Activated CD4-positive, alpha-beta memory T cell treated with anti-CD3 and anti-CD28 coated beads, Interleukin-2, amount 10 ng/mL, durations not matched to agents 7 days and 5 days (primary cell): ENCODE measurements at regions of chr1 and their contacts with region 1.

Region 1: DNA sequence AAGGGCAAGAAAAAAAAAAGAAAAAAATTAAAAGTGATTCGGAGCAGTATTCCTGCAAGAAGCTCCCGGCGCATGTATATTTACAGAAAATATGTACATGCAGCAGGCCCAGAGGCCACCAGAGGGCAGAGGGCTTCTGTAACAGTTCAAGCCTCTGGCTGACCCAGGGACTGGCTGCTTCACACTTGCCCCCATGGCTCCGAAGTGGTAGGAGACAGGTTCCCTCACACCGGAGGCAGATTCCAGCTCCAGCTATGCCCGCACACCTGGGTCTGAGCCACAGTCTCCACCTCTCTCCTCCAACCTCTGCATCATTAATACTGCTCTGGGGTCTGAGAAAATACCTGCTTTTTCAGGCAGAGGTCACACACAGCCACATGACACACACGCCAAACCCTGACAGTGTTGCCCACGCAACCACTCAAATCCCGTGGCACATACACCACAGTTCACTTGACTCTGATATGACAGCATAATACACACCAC is 2.2 kb upstream of the ARHGAP30 start:
- DNase-seq: peak; percentile 61
- H3K4me3 Mint-ChIP-seq: no peak overlapping the region
- H3K27ac Mint-ChIP-seq: peak overlapping the region; percentile 36
- H3K4me1 Mint-ChIP-seq: peaks cover 40% of the 10 kb centered on the region
- H3K27me3 Mint-ChIP-seq: no peaks in the 10 kb centered on the region

Region 2: DNA sequence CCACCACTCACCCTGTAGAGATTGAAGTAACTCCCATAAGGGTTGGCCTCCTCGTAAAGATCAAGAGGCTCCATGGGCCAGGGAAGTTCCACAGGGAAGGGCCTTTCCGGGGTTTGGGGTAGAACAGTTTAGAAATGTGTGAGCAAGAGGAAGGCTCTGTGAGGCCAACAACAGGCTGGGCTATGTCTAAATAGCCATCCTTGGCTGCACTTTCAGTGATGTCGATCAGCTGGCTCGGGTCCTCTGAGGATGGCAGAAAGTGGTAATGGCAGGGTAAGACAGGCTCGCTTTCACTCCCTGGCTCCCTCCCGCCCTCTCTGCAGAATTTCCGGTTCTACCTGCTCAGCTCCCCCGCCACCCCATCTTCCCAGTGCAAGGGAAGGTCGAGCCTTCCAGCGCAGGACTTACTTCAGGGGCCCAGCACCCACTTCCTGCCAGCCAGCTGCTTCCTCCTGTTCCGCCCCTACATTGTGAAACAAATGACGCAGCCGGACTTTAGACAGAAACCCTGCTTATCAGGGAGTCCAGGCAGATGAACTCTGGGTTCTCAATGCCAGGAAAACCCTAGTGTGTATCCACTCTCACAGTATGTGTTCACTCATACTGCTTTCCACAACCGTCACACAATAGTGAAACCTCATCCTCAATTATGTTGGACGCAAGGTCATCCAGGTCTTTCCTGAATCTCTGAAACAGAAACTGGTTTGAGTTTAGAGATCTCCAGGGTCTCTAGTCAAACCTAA is 58.3 kb before region 1 on chr1:
- CTCF ChIA-PET with region 1: interaction called, 3 read pairs
- POLR2A ChIA-PET with region 1: interaction called, 26 read pairs
- DNase-seq: peak; percentile 75
- H3K4me3 Mint-ChIP-seq: peak overlapping the region; percentile 66
- H3K27ac Mint-ChIP-seq: peak overlapping the region; percentile 94
- H3K4me1 Mint-ChIP-seq: peaks cover 35% of the 10 kb centered on the region
- H3K27me3 Mint-ChIP-seq: no peaks in the 10 kb centered on the region

Region 3: GRCh38 chr1:161054805-161055204 is 17.1 kb before region 1 on chr1:
- CTCF ChIA-PET with region 1: interaction called, 4 read pairs
- POLR2A ChIA-PET with region 1: interaction called, 293 read pairs
- DNase-seq: no peak
- H3K4me3 Mint-ChIP-seq: no peak overlapping the region
- H3K27ac Mint-ChIP-seq: no peak overlapping the region
- H3K4me1 Mint-ChIP-seq: peaks cover 35% of the 10 kb centered on the region
- H3K27me3 Mint-ChIP-seq: no peaks in the 10 kb centered on the region

Region 4: DNA sequence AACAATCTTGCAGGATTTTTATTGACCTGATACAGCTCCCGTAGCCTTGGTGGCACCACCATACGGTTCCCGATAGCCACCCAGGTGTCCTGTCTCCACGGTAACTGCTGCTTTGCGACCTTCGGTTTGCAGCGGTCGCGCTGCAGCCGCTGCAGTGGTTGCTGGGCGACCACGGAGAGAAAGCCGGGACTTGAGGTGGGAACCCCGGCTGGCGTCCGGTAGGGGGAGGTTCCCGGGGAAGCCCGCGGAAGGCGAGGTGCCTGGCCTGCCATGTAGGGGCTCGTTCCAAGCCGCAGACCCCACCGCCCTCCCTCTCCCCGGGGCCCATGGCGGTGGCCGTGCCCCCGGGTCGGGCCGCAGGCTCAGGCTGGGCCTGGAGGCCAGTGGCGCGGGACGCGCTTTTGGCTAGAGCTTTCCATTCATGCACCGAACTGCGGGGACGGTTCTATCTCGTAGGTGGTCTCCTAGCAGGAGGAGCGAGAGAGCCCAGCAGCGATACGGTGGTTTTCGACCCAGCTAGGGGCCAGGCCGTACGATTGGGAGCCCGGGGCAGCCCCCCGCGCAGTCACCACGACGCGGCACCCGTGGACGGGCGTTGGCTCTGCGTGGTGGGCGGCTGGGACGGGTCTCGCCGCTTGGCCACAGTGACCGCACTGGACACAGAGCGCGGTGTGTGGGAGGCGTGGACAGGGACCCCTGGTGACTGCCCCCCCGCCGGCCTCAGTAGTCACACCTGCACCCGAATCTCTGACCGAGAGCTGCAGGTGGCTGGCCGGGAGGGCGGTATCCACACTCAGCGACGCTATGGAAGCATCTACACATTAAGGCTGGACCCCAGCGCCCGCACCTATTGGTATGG is 26.5 kb after region 1 on chr1 and contains the start of gene KLHDC9:
- CTCF ChIA-PET with region 1: interaction called, 128 read pairs
- POLR2A ChIA-PET with region 1: interaction called, 142 read pairs
- DNase-seq: peak; percentile 81
- H3K4me3 Mint-ChIP-seq: peak within 1 kb of the TSS; percentile 85
- H3K27ac Mint-ChIP-seq: peak within 1 kb of the TSS; percentile 69
- H3K4me1 Mint-ChIP-seq: peaks cover 23% of the 10 kb centered on the region
- H3K27me3 Mint-ChIP-seq: peaks cover 6% of the 10 kb centered on the region
- total RNA-seq, gene KLHDC9: 1.2 TPM

Region 5: GRCh38 chr1:161140755-161141400 is 68.9 kb after region 1 on chr1:
- CTCF ChIA-PET with region 1: interaction called, 10 read pairs
- POLR2A ChIA-PET with region 1: interaction called, 45 read pairs
- DNase-seq: no peak
- H3K4me3 Mint-ChIP-seq: no peak overlapping the region
- H3K27ac Mint-ChIP-seq: no peak overlapping the region
- H3K4me1 Mint-ChIP-seq: peaks cover 4% of the 10 kb centered on the region
- H3K27me3 Mint-ChIP-seq: no peaks in the 10 kb centered on the region

Region 6: GRCh38 chr1:161201828-161202725 is 130.1 kb after region 1 on chr1 and contains the start of gene NDUFS2:
- CTCF ChIA-PET with region 1: no interaction called
- POLR2A ChIA-PET with region 1: interaction called, 26 read pairs
- DNase-seq: peak; percentile 97
- H3K4me3 Mint-ChIP-seq: peak within 1 kb of the TSS; percentile 92
- H3K27ac Mint-ChIP-seq: peak within 1 kb of the TSS; percentile 96
- H3K4me1 Mint-ChIP-seq: peaks cover 81% of the 10 kb centered on the region
- H3K27me3 Mint-ChIP-seq: no peaks in the 10 kb centered on the region
- total RNA-seq, gene NDUFS2: 83.0 to 87.3 TPM

Region 7: GRCh38 chr1:161266202-161266601 is 194.3 kb after region 1 on chr1:
- CTCF ChIA-PET with region 1: no interaction called
- POLR2A ChIA-PET with region 1: no interaction called
- DNase-seq: no peak
- H3K4me3 Mint-ChIP-seq: no peak overlapping the region
- H3K27ac Mint-ChIP-seq: no peak overlapping the region
- H3K4me1 Mint-ChIP-seq: peaks cover 2% of the 10 kb centered on the region
- H3K27me3 Mint-ChIP-seq: peaks cover 21% of the 10 kb centered on the region